ENCODE measurements at regions of chr2 and their contacts with region 1.

Region 1: DNA sequence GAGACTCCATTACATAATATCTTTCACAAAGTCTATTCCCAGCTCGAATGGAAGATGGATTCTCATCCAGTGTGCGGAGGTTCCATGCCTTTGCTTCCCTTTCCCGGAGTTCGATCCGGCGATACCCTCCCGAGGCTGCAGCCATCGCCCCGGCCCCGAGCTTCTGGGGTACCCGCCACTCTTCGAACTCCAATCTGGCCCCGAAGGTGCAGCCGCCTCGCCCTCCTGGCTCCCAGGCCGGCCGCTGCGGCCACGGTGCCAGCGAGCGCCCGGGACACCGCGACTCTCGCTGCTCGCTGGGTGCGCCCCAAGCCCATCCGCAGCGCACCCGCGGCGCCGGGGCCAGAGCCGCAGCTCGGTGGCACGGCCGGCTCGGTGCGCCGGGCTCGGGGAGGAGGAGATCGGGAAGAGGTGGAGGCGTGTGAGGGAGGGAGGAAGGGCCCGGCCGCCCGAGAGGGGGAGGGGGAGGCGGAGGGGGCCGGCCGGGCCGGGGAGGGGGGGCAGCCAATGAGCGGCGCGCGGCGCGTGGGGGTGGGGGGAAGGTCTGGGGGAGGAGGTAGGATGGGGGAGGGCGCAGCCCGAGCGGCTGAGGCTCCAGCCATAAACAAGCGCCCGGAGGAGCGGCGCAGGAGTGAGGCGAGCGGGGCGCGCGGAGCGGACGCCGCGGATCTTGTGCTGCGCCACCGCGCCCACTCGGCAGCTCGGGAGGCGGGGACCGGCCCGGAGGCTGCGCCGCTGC is at the start of gene CRIM1:
- DNase-seq: no peak
- ATAC-seq: peak; percentile 80
- H3K4me3 ChIP-seq: peak within 1 kb of the TSS; percentile 96 to 99
- H3K27ac ChIP-seq: peak within 1 kb of the TSS; percentile 98
- H3K4me1 ChIP-seq: peaks cover 39% of the 10 kb centered on the region
- H3K27me3 ChIP-seq: no peaks in the 10 kb centered on the region
- CTCF ChIP-seq: no peak
- total RNA-seq, gene CRIM1: 290 TPM

Region 2: DNA sequence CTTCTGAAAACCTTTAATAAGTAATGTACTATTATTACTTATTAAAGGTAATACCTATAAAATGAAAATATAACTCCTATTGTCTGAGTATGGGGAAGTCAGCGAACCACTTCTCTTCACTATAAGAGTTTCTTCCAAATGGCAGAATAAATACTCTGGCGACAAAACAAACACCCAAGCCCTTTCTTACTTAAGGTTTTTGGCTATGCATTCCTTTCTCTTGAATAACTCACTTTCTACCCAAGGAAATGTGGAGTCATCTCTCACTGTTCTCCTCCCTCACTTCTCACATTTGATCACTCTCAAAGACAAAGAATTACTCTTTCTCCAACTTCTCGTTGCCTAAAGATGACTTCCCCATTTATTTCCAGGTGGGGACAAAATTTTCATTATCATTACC is 816.5 kb before region 1 on chr2:
- CTCF ChIA-PET with region 1: interaction called, 11 read pairs
- POLR2A ChIA-PET with region 1: no interaction called
- in situ Hi-C with region 1: no loop called
- intact Hi-C with region 1: no loop called
- DNase-seq: no peak
- ATAC-seq: no peak
- H3K4me3 ChIP-seq: no peak overlapping the region
- H3K27ac ChIP-seq: no peak overlapping the region
- H3K4me1 ChIP-seq: no peaks in the 10 kb centered on the region
- H3K27me3 ChIP-seq: no peaks in the 10 kb centered on the region
- CTCF ChIP-seq: no peak

Region 3: GRCh38 chr2:36027616-36028015 is 327.7 kb before region 1 on chr2:
- CTCF ChIA-PET with region 1: no interaction called
- POLR2A ChIA-PET with region 1: interaction called, 12 read pairs
- in situ Hi-C with region 1: no loop called
- intact Hi-C with region 1: no loop called
- DNase-seq: no peak
- ATAC-seq: no peak
- H3K4me3 ChIP-seq: no peak overlapping the region
- H3K27ac ChIP-seq: no peak overlapping the region
- H3K4me1 ChIP-seq: no peaks in the 10 kb centered on the region
- H3K27me3 ChIP-seq: no peaks in the 10 kb centered on the region
- CTCF ChIP-seq: no peak

Region 4: DNA sequence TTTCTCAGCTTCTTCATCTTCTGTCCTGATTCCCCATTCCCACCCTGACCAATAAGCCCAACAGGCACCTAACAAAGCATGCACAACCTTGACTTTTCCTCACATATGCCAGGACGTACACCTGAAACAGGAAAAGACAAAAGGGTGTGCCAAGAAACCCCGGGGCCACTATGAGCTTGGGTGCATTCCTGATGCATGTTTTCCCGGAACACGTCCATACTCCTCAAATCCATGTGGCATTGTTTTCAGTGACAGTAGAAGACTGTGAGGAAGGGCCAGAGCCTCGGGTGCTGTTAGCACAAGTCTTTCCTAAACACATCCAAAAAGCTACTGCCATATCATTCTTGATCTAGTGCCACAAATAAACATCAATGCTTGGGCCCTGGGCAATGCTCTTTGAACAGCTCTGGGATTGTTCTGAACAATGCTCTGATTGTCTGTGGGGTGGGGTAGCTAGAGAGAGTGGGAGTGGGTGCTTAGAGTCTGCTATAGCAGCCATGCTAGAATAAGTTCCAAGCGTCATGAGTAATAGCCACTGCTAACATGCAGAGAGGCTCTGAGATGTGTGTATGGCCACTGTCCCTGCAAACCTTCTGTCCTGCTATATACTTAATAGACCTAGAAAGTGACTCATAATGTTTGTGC is 181.4 kb before region 1 on chr2:
- CTCF ChIA-PET with region 1: no interaction called
- POLR2A ChIA-PET with region 1: no interaction called
- in situ Hi-C with region 1: no loop called
- intact Hi-C with region 1: no loop called
- DNase-seq: no peak
- ATAC-seq: peak; percentile 82
- H3K4me3 ChIP-seq: no peak overlapping the region
- H3K27ac ChIP-seq: no peak overlapping the region
- H3K4me1 ChIP-seq: no peaks in the 10 kb centered on the region
- H3K27me3 ChIP-seq: no peaks in the 10 kb centered on the region
- CTCF ChIP-seq: no peak

Region 5: GRCh38 chr2:36253086-36253485 is 102.2 kb before region 1 on chr2:
- CTCF ChIA-PET with region 1: no interaction called
- POLR2A ChIA-PET with region 1: no interaction called
- in situ Hi-C with region 1: no loop called
- intact Hi-C with region 1: no loop called
- DNase-seq: no peak
- ATAC-seq: no peak
- H3K4me3 ChIP-seq: no peak overlapping the region
- H3K27ac ChIP-seq: no peak overlapping the region
- H3K4me1 ChIP-seq: no peaks in the 10 kb centered on the region
- H3K27me3 ChIP-seq: no peaks in the 10 kb centered on the region
- CTCF ChIP-seq: no peak

Region 6: DNA sequence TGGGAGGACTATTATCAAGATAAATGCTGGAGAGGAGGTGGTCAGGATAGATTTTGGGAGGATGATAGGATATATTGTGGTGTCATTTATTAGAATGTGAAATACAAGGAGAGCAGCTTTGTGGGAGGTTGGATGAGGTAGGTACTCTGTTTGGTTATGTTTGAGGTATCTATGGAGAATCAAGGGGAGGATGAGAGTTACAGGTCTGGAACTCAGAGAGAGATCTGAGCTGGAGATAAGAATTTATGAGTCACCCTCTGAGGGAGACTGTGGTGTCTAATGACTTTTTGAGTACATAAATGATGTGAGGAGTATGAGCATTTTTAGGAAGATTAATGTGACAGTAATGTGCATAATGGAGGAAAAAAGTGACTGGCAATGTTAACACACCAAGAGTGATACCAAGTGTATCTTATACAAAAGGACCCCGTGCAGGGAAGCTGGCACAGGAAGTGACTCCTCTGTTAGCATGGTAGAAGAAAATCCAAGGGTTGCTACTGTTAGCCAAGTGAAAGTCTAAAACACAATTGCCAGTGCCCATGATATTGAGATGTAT is 48.4 kb after region 1 on chr2:
- CTCF ChIA-PET with region 1: interaction called, 5 read pairs
- POLR2A ChIA-PET with region 1: no interaction called
- in situ Hi-C with region 1: no loop called
- intact Hi-C with region 1: loop called (anchors 5 kb)
- DNase-seq: peak; percentile 93
- ATAC-seq: peak; percentile 82
- H3K4me3 ChIP-seq: peak overlapping the region in 1 of 2 experiments; percentile 4; a peak in 2 of 4 replicates
- H3K27ac ChIP-seq: peak overlapping the region; percentile 96
- H3K4me1 ChIP-seq: peaks cover 100% of the 10 kb centered on the region
- H3K27me3 ChIP-seq: no peaks in the 10 kb centered on the region
- CTCF ChIP-seq: no peak

Region 7: GRCh38 chr2:36507408-36507812 is 152.1 kb after region 1 on chr2:
- CTCF ChIA-PET with region 1: no interaction called
- POLR2A ChIA-PET with region 1: no interaction called
- in situ Hi-C with region 1: no loop called
- intact Hi-C with region 1: loop called (anchors 1 kb)
- DNase-seq: peak; percentile 52
- ATAC-seq: peak; percentile 93
- H3K4me3 ChIP-seq: no peak overlapping the region
- H3K27ac ChIP-seq: peak overlapping the region; percentile 52
- H3K4me1 ChIP-seq: peaks cover 20% of the 10 kb centered on the region
- H3K27me3 ChIP-seq: no peaks in the 10 kb centered on the region
- CTCF ChIP-seq: peak; percentile 94

Measured in Panc1 (cell line).